ENCODE measurements at regions of chr4 and their contacts with region 1.

Region 1: DNA sequence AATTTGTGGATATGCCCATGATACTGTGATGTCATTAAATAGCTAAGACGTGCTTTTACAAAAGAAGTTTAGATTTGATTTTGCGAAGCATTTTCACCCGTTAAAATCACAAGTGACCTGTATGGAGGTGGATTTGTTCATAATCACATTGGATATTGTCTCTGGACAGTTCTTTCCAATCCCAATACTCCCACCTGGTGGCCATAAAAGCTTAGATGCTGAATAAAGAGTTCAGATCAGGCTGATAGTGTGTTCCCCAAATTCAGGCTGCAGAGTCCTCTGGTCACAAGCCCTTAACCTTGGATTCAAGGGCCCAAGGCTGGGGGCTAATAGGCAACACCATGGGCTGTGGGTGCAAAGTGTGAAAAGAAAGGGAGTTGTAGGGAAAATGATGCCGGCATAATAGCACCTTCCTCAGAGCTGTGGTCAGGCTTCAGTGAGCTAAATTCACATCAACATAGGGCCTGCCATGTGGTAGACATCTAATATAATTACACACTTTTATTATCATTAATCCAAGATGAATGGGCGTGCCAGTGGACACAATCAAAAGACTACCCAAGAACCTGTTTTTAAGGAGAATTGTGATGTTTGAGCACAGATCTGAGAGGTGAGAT is 28.1 kb downstream of the SMIM43 start:
- DNase-seq: peak in 2 of 3 donors; percentile 22 to 28
- H3K4me3 ChIP-seq: no peak overlapping the region
- H3K4me3 Mint-ChIP-seq: no peak overlapping the region
- H3K27ac ChIP-seq: no peak overlapping the region
- H3K27ac Mint-ChIP-seq: peak overlapping the region in 1 of 7 donors; percentile 37
- H3K4me1 ChIP-seq: no peaks in the 10 kb centered on the region
- H3K4me1 Mint-ChIP-seq: no peaks in the 10 kb centered on the region
- H3K27me3 ChIP-seq: no peaks in the 10 kb centered on the region
- H3K27me3 Mint-ChIP-seq: peaks cover 3 to 4% (median 4%) of the 10 kb centered on the region in 3 donors
- CTCF ChIP-seq: peak; percentile 41

Region 2: DNA sequence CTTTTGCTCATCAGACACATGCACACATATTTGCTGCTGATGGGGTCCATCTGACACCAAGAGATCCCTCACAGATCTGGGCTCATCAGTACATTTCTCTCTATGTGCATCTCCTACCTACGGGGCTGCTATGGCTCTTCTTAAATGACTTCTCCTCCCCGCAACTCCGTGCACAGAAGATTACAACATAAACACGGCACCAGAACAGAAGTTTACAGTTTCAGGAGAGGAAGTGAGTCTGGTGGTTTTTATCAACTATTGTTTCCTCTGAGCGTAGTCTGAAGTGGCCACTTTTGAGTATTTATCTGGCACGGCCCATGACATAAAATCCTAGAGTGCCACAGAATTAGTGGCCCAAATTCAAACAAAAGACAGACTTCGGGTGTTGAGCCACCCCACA is 1078.1 kb before region 1 on chr4:
- intact Hi-C with region 1: no loop called
- DNase-seq: peak; percentile 0 to 23 (median 13)
- H3K4me3 ChIP-seq: no peak overlapping the region
- H3K4me3 Mint-ChIP-seq: no peak overlapping the region
- H3K27ac ChIP-seq: no peak overlapping the region
- H3K27ac Mint-ChIP-seq: no peak overlapping the region
- H3K4me1 ChIP-seq: peaks cover 9 to 10% of the 10 kb centered on the region in 2 donors
- H3K4me1 Mint-ChIP-seq: peaks cover 12% of the 10 kb centered on the region
- H3K27me3 ChIP-seq: no peaks in the 10 kb centered on the region
- H3K27me3 Mint-ChIP-seq: no peaks in the 10 kb centered on the region
- CTCF ChIP-seq: no peak

Region 3: GRCh38 chr4:121462660-121463261 is 274.1 kb before region 1 on chr4:
- intact Hi-C with region 1: loop called in 1 of 2 experiments (anchors 10 kb)
- DNase-seq: peak; percentile 6 to 26 (median 23)
- H3K4me3 ChIP-seq: no peak overlapping the region
- H3K4me3 Mint-ChIP-seq: no peak overlapping the region
- H3K27ac ChIP-seq: no peak overlapping the region
- H3K27ac Mint-ChIP-seq: no peak overlapping the region
- H3K4me1 ChIP-seq: no peaks in the 10 kb centered on the region
- H3K4me1 Mint-ChIP-seq: no peaks in the 10 kb centered on the region
- H3K27me3 ChIP-seq: no peaks in the 10 kb centered on the region
- H3K27me3 Mint-ChIP-seq: peaks cover 1 to 6% (median 5%) of the 10 kb centered on the region in 3 donors
- CTCF ChIP-seq: peak; percentile 64

Region 4: GRCh38 chr4:121668368-121669162 is 68.3 kb before region 1 on chr4:
- intact Hi-C with region 1: loop called in 1 of 2 experiments (anchors 10 kb)
- DNase-seq: no peak
- H3K4me3 ChIP-seq: no peak overlapping the region
- H3K4me3 Mint-ChIP-seq: no peak overlapping the region
- H3K27ac ChIP-seq: no peak overlapping the region
- H3K27ac Mint-ChIP-seq: peak overlapping the region in 2 of 7 donors; percentile 3 to 23
- H3K4me1 ChIP-seq: no peaks in the 10 kb centered on the region
- H3K4me1 Mint-ChIP-seq: no peaks in the 10 kb centered on the region
- H3K27me3 ChIP-seq: no peaks in the 10 kb centered on the region
- H3K27me3 Mint-ChIP-seq: no peaks in the 10 kb centered on the region
- CTCF ChIP-seq: no peak

Measured in CD14-positive monocyte (primary cell).